Cardiac septum (tissue), 1 donor: ENCODE measurements at regions of chr4 and their contacts with region 1.

Region 1: GRCh38 chr4:53908661-53909078 is 155.7 kb downstream of the CHIC2 start:
- DNase-seq: no peak

Region 2: DNA sequence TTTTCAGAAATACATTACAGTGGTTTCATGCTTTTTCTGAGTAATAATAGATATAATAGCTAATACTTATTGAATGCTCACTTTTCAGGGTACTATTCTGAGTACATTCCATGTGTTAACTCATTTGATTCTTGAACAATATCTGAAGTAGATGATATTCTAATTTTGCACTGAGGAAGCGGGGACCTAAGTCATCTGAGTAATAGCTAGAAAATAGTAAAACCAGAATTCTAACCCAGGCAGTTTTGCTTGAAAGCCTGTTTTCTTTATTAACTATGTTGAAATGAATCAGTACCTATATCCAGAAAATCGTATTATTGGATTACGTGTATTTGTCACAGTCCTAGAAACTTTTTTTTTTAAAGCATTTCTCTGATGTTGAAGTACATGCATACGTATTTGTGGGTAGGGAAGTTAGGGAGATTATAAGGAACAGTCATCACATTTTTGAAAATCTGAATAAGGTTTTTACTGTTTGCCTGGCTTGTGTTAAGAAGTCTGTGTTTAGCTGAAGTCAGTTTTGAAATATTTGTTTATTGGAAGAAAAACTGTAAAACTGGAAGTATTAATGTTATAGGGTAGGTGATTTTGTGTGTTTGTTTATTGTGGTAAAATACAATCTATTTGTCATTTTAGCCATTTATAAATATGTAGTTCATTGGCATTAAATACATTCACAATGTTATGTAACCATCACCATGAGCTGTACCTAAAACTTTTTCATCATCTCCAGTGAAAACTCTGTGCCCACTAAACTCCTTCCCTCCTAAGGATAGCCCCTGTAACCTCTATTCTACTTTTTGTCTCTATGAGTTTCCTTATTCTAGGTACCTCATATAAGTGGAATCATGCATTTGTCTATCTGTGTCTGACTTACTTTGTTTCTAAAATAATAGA is 475.9 kb before region 1 on chr4:
- intact Hi-C with region 1: no loop called
- DNase-seq: no peak

Region 3: GRCh38 chr4:53497487-53498244 is 411.0 kb before region 1 on chr4:
- intact Hi-C with region 1: loop called (anchors 5 kb)
- DNase-seq: no peak

Region 4: DNA sequence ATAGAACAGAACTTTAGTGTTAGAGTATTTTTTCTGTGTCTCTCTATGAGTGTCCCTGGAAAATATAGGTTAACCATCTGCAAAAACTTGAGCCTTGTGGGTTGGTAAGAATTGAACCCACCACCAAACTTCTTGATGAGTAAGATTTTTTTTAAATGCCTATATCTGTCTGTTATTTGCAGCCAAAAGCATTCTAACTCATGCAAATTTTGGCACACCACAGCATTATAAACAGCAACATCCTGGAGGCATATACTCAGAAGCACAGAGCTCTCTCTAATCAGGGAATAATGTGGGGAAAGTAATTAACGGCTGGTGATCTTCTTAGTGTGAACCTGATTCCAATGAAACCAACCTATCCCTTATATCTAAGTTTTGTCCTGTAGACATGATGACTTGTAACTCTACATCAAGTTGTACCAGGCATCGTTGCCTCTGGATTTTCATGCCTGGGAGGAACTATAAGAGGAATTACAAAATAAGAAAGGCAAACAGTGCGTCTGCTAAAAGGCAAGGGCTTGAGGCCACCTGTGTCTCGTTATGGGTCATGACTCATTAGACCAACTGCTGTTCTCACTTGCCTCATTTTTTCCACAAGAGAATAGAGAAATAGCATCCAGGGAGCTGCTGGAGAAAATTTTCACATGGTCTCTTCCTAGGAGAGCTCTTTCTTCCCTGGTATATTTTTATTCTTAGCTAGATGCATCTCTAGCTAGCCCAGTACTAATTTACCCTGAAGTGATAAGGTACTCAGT is 46.6 kb before region 1 on chr4:
- intact Hi-C with region 1: loop called (anchors 5 kb)
- DNase-seq: no peak

Region 5: DNA sequence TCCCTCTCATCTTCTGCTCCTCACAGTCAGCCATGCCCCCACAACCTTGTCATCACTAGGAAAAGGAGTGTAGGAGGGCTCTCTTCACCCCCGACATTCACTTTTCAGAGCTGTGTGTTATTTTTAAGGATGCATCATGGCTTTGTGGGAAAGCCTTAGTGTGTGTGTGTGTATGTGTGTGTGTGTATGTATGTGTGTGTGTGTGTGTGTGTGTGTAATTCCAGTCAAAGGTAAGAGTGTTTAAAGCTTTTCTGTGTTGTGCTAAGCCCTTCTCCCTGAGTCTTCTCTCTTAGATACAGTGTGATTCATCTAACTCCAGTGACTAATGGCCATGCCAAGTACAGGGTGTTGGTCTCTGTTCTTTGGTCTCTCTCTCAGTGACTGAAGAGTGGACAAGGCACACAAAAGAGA is 79.1 kb after region 1 on chr4:
- intact Hi-C with region 1: no loop called
- DNase-seq: no peak

Region 6: GRCh38 chr4:54632537-54632936 is 723.9 kb after region 1 on chr4:
- intact Hi-C with region 1: no loop called
- DNase-seq: no peak